ENCODE measurements at regions of chr1 and their contacts with region 1.

Region 1: DNA sequence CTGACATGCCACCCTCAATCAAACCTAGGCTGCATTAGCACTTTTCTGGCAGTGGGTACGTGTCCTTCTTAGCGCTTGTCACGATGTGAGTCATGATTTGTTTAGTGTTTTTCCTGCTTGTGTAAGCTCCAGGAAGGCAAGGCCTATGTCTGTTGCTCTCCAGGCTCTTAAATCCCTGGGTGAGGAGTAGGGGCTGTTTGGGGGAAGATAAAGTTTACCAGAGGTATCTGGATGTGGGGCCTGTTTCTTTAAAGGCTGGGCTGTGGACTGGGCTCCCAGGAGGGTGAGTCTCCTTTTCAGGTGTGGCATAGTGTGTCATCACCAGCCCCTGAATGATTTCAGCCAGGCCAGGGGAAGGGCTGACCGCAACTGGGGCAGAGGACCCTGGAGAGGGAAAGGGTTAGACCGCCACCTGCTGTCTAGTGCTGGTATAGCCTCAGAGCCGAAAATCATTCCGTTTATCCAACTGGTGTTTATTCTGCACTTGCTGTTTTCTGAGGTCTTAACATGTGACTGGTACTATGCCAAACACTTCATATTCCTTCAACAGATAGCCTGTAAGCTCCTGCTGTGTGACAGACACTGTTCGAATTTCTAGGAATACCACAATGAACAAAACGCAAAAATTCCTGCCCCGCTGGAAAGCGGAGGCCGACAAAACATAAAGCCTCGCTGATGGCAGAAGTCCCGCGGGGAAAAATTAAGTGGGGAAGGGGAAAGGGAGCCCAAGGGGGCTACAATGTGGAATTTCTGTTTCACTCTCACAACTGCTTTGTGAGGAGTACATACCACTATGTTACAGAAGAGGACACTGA is 9.7 kb downstream of the SERINC2 start:
- DNase-seq: no peak
- H3K4me3 ChIP-seq: no peak overlapping the region
- CTCF ChIP-seq: peak; percentile 92

Region 2: DNA sequence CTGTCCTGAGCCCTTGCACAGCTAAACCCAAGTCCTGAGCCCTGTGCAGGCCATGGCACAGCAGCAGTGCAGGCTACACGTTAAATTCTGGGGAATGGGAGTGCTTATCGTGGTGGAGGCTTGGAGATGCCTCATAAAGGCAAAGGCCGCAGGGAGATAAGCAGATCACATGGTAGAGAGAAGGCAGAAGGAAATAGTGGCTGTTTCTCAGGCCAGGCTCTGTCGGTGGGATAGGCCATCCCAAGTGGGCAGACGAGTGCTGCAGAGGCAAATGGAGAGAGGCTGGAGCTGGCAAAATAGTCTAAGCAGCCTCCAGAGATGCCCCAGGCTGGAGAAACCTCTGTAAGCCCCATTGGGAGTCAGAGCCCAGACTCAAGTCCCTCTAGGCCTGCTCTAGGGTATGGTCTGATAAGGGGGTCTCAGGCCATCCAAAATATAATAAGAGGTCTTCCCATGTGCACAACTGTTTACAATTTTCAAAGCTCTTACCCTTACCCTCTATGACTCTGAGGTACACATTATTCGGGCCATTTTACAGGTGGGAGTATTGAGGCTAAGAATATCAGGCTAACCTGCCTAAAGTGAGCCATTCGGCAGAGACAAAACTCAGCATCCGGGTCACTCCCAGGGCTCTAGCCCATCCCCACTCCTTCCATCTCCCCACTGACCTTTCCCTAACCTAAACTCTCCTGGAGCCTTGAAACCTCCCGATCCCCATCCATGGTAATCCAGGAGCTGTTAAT is 262.7 kb before region 1 on chr1:
- CTCF ChIA-PET with region 1: interaction called, 11 read pairs
- POLR2A ChIA-PET with region 1: no interaction called
- DNase-seq: no peak
- H3K4me3 ChIP-seq: no peak overlapping the region
- CTCF ChIP-seq: no peak

Region 3: DNA sequence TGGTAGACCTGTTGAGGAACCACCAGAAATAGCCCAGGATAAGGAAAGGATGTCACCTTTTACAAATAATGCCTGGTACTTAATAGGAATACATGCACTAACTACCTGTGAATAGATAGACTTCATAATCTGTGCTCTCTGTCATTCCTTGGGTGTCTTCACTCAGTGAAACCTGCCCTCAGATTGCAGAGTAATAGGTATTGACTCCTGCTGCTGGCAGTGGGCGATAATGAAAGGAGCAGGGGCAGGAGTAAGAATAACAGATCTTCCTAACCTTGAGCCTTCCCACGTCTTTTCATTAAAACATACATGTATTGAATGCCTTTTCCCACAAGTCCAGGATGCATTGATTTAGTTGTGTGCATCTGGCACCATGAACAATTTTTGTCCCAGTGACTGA is 66.3 kb before region 1 on chr1:
- CTCF ChIA-PET with region 1: no interaction called
- POLR2A ChIA-PET with region 1: no interaction called
- DNase-seq: no peak
- H3K4me3 ChIP-seq: no peak overlapping the region
- CTCF ChIP-seq: no peak

Region 4: DNA sequence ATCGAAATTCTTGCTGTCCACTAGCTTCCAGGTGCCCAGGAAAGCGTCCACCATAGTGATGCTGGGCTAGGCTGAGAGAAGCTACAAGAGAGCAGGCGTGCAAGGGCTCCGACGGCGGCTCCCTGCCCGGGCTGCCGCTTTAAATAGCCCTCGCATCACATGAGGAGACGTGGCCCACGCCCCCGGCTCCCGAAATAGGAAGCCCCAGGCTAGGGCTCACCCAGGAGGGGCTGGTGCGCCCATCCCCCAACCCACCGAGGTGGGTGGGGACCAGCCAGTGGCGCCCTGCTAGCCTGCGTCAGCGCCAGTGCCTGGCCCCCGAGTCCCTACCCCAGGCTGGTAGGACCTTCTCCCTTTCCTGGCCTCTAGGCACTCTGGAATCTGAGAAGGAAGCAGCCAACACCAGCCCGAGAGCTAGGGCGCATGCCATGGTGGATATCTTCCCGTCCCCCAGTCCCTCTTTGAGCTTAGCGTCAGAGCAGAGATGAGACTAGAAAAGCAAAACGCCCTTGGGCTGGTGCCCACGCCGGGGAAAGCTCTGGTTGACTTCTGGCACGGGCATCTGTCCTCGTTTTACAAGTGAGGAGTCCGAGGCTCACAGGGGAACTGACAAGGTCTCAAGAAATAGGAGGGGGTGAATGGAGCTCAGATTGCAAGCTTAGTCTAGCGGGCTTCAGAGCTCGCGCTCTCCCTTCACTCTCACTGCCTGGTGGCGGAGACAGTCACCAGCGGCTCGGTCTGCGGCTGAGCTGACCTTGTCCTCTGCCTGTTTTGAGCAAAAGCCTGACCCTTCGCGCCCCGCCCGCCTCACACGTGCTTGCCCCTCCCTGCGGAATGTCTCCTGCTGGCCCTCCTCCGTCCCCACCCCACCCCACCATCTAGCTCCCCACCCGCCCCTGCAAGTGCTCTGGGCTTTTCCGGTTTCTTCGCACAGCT is 49.5 kb before region 1 on chr1 and contains the start of gene FABP3:
- CTCF ChIA-PET with region 1: interaction called, 62 read pairs
- POLR2A ChIA-PET with region 1: interaction called, 3 read pairs
- DNase-seq: no peak
- H3K4me3 ChIP-seq: peak within 1 kb of the TSS; percentile 54
- CTCF ChIP-seq: no peak

Region 5: GRCh38 chr1:31382379-31382989 is 40.2 kb before region 1 on chr1:
- CTCF ChIA-PET with region 1: interaction called, 62 read pairs
- POLR2A ChIA-PET with region 1: no interaction called
- DNase-seq: no peak
- H3K4me3 ChIP-seq: no peak overlapping the region
- CTCF ChIP-seq: no peak

Region 6: DNA sequence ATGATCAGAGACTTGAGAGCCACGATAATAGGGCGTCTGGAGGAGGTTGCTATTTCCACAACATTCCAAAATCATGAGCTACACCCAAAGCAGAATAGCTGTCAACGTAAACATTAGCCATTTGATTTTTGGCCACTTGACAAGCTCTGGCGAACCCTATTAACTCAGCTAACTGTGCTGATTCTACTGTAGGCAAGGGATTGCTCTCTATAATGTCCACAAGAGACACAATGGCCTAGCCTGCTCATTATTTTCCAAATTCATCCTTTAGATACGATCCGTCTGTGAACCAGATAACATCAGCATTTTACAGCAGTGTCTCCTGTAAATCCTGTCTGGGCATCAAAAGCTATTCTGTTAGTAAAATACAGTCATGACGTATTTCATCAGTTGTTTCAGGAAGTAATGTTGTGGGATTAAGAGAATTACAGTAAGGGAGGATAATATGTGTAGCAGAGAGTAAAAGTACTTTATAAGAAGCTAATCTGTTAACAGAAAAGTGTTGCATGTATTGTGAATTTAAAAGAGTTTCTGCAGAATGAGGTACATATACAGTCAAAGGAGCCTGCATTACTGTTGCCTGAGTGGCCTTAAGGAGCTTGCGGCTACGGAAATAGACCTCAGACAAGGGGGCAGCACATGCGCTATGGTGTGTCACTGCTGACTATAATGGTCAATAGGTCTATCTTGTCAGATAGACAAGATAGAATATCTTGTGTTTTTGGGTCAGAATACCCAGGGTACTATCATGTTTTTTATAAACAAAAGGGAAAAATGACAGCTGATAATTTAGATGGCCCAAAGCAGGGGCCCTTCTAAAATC is 108.7 kb after region 1 on chr1:
- CTCF ChIA-PET with region 1: interaction called, 11 read pairs
- POLR2A ChIA-PET with region 1: no interaction called
- DNase-seq: no peak
- H3K4me3 ChIP-seq: no peak overlapping the region
- CTCF ChIP-seq: no peak